Activated CD4-positive, alpha-beta memory T cell treated with anti-CD3 and anti-CD28 coated beads for 36 hours (primary cell): ENCODE measurements at regions of chr5 and their contacts with region 1.

Region 1: GRCh38 chr5:163347671-163348070 is 89.7 kb upstream of the CCNG1 start:
- DNase-seq: peak; percentile 63
- H3K4me3 Mint-ChIP-seq: no peak overlapping the region
- H3K27ac Mint-ChIP-seq: no peak overlapping the region
- H3K4me1 Mint-ChIP-seq: no peaks in the 10 kb centered on the region
- H3K27me3 Mint-ChIP-seq: peaks cover 4% of the 10 kb centered on the region

Region 2: DNA sequence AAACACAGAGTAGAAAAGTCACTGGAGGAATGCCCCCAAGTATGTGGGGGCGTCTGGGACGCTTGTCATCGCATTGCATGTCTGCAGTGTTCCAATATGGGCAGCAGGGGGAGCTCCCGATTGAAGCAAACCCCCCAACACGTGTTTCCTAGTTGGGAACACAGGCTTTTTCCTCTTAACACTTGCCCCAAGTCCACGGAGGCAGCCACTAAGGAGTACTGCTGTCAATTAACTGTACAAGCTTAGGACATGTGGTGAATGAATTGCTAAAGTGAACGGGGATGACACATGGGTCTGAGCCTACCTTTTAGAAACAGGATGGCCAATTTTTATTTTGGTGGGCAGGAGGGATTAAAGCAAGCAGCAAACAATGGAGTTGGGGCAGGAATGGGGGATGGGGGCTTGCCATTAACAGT is 1803.3 kb before region 1 on chr5:
- CTCF ChIA-PET with region 1: interaction called, 3 read pairs
- POLR2A ChIA-PET with region 1: no interaction called
- intact Hi-C with region 1: loop called (anchors 2 kb)
- DNase-seq: peak; percentile 40
- H3K4me3 Mint-ChIP-seq: no peak overlapping the region
- H3K27ac Mint-ChIP-seq: no peak overlapping the region
- H3K4me1 Mint-ChIP-seq: peaks cover 15% of the 10 kb centered on the region
- H3K27me3 Mint-ChIP-seq: peaks cover 44% of the 10 kb centered on the region

Region 3: GRCh38 chr5:163079618-163080017 is 268.1 kb before region 1 on chr5:
- CTCF ChIA-PET with region 1: no interaction called
- POLR2A ChIA-PET with region 1: no interaction called
- intact Hi-C with region 1: loop called (anchors 5 kb)
- DNase-seq: no peak
- H3K4me3 Mint-ChIP-seq: no peak overlapping the region
- H3K27ac Mint-ChIP-seq: no peak overlapping the region
- H3K4me1 Mint-ChIP-seq: no peaks in the 10 kb centered on the region
- H3K27me3 Mint-ChIP-seq: no peaks in the 10 kb centered on the region

Region 4: GRCh38 chr5:163306421-163306820 is 41.2 kb before region 1 on chr5:
- CTCF ChIA-PET with region 1: interaction called, 19 read pairs
- POLR2A ChIA-PET with region 1: no interaction called
- intact Hi-C with region 1: loop called (anchors 2 kb)
- DNase-seq: no peak
- H3K4me3 Mint-ChIP-seq: no peak overlapping the region
- H3K27ac Mint-ChIP-seq: no peak overlapping the region
- H3K4me1 Mint-ChIP-seq: peaks cover 5% of the 10 kb centered on the region
- H3K27me3 Mint-ChIP-seq: no peaks in the 10 kb centered on the region